ENCODE measurements at regions of chr3 and their contacts with region 1.

Region 1: DNA sequence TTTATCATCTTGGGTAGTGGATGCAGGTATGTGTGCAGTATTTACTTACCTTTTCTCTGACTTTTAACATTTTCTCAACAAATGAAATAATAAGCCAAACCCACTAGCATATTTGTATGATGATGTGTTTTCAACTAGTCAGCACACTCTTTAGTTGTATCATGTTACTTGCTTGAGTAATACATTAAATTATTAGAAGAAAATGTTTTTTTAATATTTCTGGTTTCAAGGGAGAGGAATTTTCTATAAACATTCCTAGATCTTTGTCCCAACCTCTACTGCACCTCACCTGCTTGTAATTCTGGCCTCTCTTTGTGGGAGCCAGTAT is 161.8 kb upstream of the CBLB start:
- DNase-seq: peak; percentile 87
- ATAC-seq: peak; percentile 82
- H3K4me3 ChIP-seq: peak overlapping the region; percentile 30; the same call in 1 of the 2 replicates
- H3K27ac ChIP-seq: peak overlapping the region; percentile 82
- H3K4me1 ChIP-seq: peaks cover 54% of the 10 kb centered on the region
- H3K27me3 ChIP-seq: no peaks in the 10 kb centered on the region
- CTCF ChIP-seq: no peak

Region 2: DNA sequence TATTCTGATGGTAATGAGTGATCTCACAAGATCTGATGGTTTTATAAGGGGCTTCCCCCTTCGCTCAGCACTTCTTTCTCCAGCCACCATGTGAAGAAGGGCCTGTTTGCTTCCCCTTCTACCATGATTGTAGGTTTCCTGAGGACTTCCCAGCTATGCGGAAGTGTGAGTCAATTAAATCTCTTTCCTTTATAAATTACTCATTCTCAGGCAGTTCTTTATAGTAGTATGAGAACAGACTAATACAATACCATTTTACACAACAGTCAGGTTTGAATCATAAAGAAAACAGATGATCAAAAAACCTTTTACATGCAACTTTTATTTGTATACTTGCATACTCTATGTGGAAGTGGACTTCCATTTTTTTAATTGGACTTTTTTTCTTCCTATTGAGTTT is 115.1 kb before region 1 on chr3:
- CTCF ChIA-PET with region 1: no interaction called
- POLR2A ChIA-PET with region 1: no interaction called
- intact Hi-C with region 1: loop called (anchors 5 kb)
- DNase-seq: peak; percentile 82
- ATAC-seq: peak; percentile 95
- H3K4me3 ChIP-seq: no peak overlapping the region
- H3K27ac ChIP-seq: peak overlapping the region; percentile 92
- H3K4me1 ChIP-seq: peaks cover 4% of the 10 kb centered on the region
- H3K27me3 ChIP-seq: no peaks in the 10 kb centered on the region
- CTCF ChIP-seq: no peak

Region 3: GRCh38 chr3:105965384-105965783 is 65.2 kb before region 1 on chr3:
- CTCF ChIA-PET with region 1: no interaction called
- POLR2A ChIA-PET with region 1: no interaction called
- intact Hi-C with region 1: loop called (anchors 5 kb)
- DNase-seq: no peak
- ATAC-seq: no peak
- H3K4me3 ChIP-seq: no peak overlapping the region
- H3K27ac ChIP-seq: no peak overlapping the region
- H3K4me1 ChIP-seq: peaks cover 38% of the 10 kb centered on the region
- H3K27me3 ChIP-seq: no peaks in the 10 kb centered on the region
- CTCF ChIP-seq: no peak

Region 4: DNA sequence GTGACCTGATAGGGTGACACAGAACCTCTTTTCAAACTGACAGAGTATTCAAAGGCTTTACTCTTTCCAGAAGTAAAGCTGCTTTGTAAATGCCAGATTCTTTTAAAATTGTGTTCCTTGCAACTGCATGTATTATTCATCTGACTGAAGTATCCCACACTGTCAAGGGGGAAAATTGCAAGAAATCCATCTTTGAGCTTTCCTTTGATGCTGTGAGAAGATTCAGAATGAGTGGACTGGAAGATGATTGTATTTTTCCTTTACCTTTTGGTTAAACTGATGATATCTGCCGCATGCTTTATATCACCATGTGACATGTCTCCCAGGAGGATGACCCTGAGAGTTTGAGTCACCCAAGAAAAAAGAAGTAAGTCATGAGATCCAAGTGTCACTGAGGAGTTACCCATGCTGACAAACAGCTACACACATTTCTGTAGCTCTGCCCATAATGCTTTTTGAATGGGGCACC is 89.1 kb after region 1 on chr3:
- CTCF ChIA-PET with region 1: no interaction called
- POLR2A ChIA-PET with region 1: interaction called, 4 read pairs
- intact Hi-C with region 1: loop called (anchors 5 kb)
- DNase-seq: peak; percentile 34
- ATAC-seq: no peak
- H3K4me3 ChIP-seq: no peak overlapping the region
- H3K27ac ChIP-seq: peak overlapping the region; percentile 58
- H3K4me1 ChIP-seq: peaks cover 75% of the 10 kb centered on the region
- H3K27me3 ChIP-seq: no peaks in the 10 kb centered on the region
- CTCF ChIP-seq: no peak